Activated B cell treated with CpG ODN at 0.5 μM for 24 hours (primary cell): ENCODE measurements at regions of chr19 and their contacts with region 1.

Region 1: DNA sequence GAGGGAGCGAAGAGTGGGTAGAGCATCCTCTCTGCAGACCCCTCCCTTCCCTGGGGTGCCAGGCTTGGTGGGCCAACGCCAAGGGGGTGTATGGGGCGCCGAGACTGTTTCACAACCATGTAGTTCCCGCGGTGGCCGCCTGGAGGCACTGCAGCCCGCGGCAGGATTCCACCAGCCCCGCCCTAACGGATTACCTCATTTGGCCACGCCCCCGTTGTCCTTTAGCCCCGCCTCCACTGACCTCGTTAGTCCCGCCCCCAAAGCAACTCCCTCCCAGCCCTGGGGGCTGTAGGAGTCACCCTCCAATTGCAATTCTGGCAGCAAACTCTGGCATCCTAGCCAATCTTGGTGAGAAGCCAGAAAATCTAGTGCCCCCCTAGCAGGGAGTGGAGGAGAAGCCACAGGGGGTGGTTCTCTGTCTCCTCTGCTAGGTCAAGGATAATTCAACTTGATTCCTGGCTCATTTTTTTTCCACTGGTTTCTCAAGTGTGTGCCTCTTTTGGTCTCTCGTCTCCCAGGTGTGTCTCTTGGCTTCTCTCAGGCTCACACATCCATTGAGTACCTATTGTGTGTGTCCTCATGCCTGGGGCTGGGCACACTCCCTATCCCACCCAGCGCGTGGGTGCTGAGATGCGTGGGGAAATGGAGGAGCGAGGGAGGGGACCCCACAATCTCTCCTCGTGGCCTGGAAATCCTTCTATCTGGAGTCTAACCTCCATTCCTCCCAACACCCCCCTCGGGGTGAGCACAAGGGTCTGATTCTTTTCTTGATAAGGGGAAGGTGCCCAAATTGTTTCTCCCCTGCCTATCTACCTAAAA is 2.0 kb downstream of the OLFM2 start:
- DNase-seq: peak; percentile 67
- ATAC-seq: peak; percentile 83
- H3K4me3 Mint-ChIP-seq: no peak overlapping the region
- H3K27ac Mint-ChIP-seq: no peak overlapping the region
- H3K4me1 Mint-ChIP-seq: peaks cover 27% of the 10 kb centered on the region
- H3K27me3 Mint-ChIP-seq: peaks cover 52% of the 10 kb centered on the region
- CTCF ChIP-seq: no peak

Region 2: DNA sequence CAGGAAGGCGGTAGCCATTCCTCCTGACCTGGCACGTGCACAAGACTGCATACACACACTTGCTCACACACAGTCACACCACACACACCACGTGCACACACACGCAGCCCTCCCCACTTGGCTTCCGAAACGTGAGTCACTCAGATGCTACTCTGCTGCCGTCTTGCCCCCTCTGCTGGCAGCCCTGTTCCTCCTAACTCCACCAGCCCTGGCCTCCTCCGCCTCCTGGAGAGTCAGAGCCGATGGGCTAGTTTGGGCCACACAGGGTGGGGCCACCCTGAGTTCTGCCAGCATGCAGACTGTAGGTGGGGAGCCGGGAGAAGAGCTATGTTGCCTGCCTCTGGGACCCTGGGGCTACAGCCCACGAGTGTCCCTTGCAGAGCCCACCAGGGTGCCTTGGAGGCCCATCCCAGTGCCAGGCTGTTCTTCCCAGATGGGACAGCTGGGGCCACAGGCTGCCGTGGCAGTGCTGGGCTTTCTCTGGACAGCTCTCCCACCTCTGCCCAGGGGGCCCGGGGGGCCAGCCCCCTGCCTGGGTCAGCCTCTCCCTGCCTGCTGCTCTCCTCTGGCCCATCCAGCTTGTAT is 87.2 kb before region 1 on chr19:
- CTCF ChIA-PET with region 1: no interaction called
- POLR2A ChIA-PET with region 1: no interaction called
- intact Hi-C with region 1: no loop called
- DNase-seq: no peak
- ATAC-seq: no peak
- H3K4me3 Mint-ChIP-seq: no peak overlapping the region
- H3K27ac Mint-ChIP-seq: no peak overlapping the region
- H3K4me1 Mint-ChIP-seq: no peaks in the 10 kb centered on the region
- H3K27me3 Mint-ChIP-seq: no peaks in the 10 kb centered on the region
- CTCF ChIP-seq: no peak

Region 3: DNA sequence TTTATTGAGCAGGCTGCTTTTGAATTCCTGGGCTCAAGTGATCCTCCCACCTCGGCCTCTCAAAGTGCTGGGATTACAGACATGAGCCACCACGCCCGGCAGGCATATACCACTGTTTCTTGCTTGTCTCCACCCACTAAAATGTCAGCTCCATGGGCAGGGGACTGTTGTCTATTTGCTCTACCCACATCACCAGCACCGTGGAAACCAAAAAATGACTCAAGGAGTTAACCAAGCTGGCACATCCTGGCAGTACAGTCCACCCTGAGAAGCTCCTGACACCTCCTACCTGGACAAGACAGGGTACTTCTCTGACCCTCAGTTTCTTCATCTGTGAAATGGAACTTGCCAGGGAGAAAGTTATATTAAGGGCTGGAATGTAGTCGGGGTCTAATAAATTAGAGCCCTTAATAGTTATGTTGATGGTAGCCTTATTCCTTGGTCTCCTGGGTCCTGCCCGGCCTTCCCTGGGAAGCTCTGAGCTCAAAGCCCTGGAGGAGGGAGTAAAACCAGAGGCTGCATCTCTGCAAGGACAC is 92.9 kb after region 1 on chr19:
- CTCF ChIA-PET with region 1: interaction called, 21 read pairs
- POLR2A ChIA-PET with region 1: no interaction called
- intact Hi-C with region 1: loop called (anchors 1 kb)
- DNase-seq: no peak
- ATAC-seq: no peak
- H3K4me3 Mint-ChIP-seq: no peak overlapping the region
- H3K27ac Mint-ChIP-seq: no peak overlapping the region
- H3K4me1 Mint-ChIP-seq: no peaks in the 10 kb centered on the region
- H3K27me3 Mint-ChIP-seq: peaks cover 23% of the 10 kb centered on the region
- CTCF ChIP-seq: no peak

Region 4: DNA sequence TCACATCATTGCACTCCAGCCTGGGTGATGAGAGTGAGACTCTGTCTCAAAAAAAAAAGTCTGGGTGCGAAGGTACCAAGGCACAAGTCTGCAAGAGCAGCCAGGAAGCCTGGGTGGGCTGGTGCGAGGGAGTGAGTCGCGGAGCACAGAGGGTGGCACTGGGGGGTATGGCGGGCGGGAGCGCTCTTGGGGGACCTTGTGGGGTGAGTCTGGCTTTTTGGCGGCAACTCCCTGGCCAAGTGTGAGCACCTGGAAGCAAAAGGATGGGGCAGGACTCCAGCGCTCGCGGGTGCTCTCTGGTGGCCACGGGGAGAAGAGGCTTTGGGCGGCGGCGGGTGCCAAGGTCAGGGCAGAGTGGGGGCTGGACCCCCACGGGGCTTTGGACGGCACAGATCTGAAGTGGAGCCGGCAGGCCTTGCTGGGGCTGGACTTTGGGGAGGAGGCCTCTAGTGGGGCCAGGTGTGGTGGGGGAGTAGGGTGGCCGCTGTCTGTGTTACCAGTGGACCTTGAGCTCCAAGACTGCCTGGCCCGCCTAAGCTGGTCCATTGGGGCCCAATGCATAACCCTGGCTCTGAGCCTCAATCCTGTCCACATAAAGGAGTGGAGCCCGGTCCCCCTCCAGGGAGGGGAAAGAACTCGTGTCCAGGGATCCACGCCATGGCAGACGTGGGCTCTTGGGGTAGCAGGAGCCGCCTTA is 178.7 kb after region 1 on chr19:
- CTCF ChIA-PET with region 1: interaction called, 4 read pairs
- POLR2A ChIA-PET with region 1: no interaction called
- intact Hi-C with region 1: loop called (anchors 1 kb)
- DNase-seq: peak; percentile 66
- ATAC-seq: peak; percentile 49
- H3K4me3 Mint-ChIP-seq: peak overlapping the region; percentile 76
- H3K27ac Mint-ChIP-seq: peak overlapping the region; percentile 82
- H3K4me1 Mint-ChIP-seq: peaks cover 40% of the 10 kb centered on the region
- H3K27me3 Mint-ChIP-seq: no peaks in the 10 kb centered on the region
- CTCF ChIP-seq: no peak

Region 5: DNA sequence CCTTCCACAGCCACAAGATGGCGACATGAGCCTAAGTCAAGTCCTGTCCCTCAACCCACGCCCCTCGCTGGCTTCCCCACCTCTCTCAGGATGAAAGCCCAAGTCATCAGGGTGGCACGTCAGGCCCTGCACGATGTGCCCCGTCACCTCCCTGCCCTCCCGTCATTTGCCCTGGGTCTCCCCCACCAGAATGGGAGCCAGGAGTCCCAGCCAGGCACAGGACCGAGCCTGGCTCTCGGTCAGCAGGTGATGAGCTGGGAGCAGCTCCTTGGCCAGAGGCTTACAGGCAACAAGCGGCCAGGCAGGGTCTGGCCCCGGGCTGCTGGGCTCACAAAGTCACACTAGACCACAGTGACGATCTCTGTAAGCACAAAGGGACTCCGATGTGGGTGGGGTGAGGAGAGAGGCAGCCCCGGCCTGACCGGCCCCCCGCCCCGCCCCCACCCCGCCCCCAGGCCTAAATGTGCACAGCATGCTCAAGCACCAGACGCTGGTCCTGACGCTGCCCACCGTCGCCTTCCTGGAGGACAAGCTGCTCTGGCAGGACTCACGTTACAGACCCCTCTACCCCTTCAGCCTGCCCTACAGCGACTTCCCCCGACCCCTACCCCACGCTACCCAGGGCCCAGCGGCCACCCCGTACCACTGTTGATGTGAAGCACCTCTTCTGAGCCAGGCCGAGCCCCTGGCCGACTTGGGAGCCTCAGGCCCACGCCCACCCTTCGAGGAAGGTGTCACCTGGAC is 325.0 kb after region 1 on chr19:
- CTCF ChIA-PET with region 1: interaction called, 18 read pairs
- POLR2A ChIA-PET with region 1: no interaction called
- intact Hi-C with region 1: loop called (anchors 2 kb)
- DNase-seq: peak; percentile 68
- ATAC-seq: peak; percentile 93
- H3K4me3 Mint-ChIP-seq: no peak overlapping the region
- H3K27ac Mint-ChIP-seq: no peak overlapping the region
- H3K4me1 Mint-ChIP-seq: peaks cover 5% of the 10 kb centered on the region
- H3K27me3 Mint-ChIP-seq: no peaks in the 10 kb centered on the region
- CTCF ChIP-seq: no peak

Region 6: GRCh38 chr19:10388957-10389356 is 454.6 kb after region 1 on chr19:
- CTCF ChIA-PET with region 1: interaction called, 17 read pairs
- POLR2A ChIA-PET with region 1: interaction called, 3 read pairs
- intact Hi-C with region 1: loop called (anchors 1 kb)
- DNase-seq: peak; percentile 77
- ATAC-seq: peak; percentile 56
- H3K4me3 Mint-ChIP-seq: no peak overlapping the region
- H3K27ac Mint-ChIP-seq: peak overlapping the region; percentile 35
- H3K4me1 Mint-ChIP-seq: peaks cover 23% of the 10 kb centered on the region
- H3K27me3 Mint-ChIP-seq: no peaks in the 10 kb centered on the region
- CTCF ChIP-seq: peak; percentile 92